K562 (cell line): ENCODE measurements at regions of chr17 and their contacts with region 1.

Region 1: DNA sequence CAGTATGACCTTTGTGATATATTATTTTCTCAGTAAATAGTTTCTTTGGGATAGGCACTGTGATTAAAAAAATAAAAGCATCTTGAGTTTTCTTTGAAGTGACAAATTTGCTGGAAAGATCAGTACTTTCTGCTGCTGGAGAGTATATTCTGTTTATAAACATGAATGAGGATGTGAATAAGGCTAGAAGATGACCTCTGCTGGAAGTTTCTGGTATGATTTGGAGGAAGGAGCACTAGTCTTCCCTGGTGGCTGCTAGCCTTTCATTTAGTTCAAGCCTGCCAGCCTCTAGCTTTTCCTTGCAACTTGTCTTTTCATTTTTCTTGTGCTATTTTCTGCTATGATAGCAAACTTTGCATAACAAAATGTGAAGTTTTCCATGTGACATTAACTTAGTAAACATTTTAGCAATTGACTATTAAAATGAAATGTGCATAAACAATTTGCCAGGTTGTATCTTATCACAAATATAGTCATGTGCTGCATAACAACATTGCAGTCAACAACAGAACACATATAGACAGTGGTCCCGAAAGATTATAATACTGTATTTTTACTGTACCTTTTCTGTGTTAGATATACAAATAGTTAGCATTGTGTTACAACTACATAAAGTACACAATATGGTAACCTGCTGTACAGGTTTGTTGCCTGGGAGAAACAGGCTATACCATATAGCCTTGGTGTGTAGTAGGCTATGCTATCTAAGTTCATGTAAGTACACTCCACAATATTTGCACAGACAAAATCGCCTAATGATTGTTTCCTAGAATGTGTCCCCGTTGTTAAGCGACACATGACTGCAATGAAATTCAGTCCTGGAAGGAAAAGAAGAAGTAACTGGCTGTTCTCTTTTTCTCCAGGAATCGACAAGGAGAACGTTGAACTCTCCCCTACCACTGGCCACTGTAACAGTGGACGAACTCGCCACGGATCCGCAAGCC is 18.1 kb upstream of the RAB11FIP4 start:
- DNase-seq: peak; percentile 26 to 58 (median 42)
- ATAC-seq: peak; percentile 86
- H3K4me3 ChIP-seq: no peak overlapping the region
- H3K27ac ChIP-seq: no peak overlapping the region
- H3K4me1 ChIP-seq: no peaks in the 10 kb centered on the region
- H3K27me3 ChIP-seq: no peaks in the 10 kb centered on the region
- CTCF ChIP-seq: peak; percentile 53 to 68 (median 56); a peak in 5 of 6 replicates
- EP300 ChIP-seq: no peak
- POLR2A ChIP-seq: no peak
- RAD21 ChIP-seq: peak; percentile 49 to 79

Region 2: DNA sequence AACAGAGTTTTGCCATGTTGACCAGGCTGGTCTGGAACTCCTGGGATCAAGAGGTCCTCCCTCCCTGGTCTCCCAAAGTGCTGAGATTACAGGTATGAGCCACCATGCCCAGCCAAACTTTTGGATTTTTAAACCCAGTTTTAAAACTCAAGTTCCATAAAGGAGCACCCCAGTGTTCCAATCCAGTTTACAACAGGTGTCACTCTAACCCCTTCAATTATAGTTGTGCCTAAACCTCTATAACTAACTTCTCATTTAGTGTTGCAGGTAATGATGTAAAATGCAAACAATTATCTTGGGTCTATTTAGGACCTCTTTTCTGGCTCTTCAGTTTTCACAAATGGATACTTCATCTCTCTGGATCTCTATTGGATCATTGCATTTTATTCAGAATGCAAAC is 459.5 kb before region 1 on chr17:
- CTCF ChIA-PET with region 1: no interaction called
- POLR2A ChIA-PET with region 1: no interaction called
- in situ Hi-C with region 1: loop called (anchors 10 kb)
- intact Hi-C with region 1: no loop called
- DNase-seq: no peak
- ATAC-seq: no peak
- H3K4me3 ChIP-seq: no peak overlapping the region
- H3K27ac ChIP-seq: no peak overlapping the region
- H3K4me1 ChIP-seq: no peaks in the 10 kb centered on the region
- H3K27me3 ChIP-seq: peaks cover 0 to 2% of the 10 kb centered on the region in 2 experiments; a peak in 2 of 5 replicates
- CTCF ChIP-seq: peak in 1 of 3 experiments; percentile 13; a peak in 1 of 6 replicates
- EP300 ChIP-seq: no peak
- POLR2A ChIP-seq: no peak
- RAD21 ChIP-seq: peak in 1 of 2 experiments; percentile 32; a peak in 2 of 4 replicates

Region 3: DNA sequence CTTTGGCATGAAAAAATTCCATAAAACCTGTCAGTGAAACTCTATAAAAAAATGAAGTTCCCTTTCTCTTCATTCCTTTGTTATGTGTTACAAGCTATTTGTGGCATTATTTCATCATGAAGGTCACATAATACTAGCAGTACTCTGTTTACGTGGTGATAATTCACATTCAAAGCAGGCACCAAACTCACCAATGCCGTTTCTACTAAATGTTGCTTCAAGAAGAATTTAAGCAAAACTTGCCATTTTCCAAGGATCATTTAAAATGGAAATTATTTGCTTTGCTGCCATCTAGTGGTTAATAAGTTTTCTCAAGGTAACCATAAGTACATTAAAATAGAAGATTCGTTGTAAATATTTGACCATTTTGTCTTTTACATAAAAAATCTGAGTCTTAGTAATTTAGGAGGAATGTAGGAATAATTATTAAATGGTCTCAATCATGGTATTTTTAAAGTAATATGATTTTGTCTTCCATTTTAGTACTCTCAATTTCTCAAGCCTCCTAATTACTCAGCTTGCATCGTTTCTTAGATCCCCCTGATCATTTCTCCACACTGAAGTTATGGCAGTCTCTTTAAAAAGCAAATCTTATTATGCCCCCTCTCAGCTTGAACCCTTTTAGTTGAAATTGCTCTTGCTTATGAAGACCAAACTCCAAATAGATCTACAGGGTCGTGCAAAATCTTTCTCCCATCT is 157.2 kb before region 1 on chr17:
- CTCF ChIA-PET with region 1: interaction called, 5 read pairs
- POLR2A ChIA-PET with region 1: no interaction called
- in situ Hi-C with region 1: no loop called
- intact Hi-C with region 1: loop called (anchors 10 kb)
- DNase-seq: peak in 2 of 4 experiments; percentile 17 to 41
- ATAC-seq: 0 out of 3 replicates have a peak, but pooled peaks have one; percentile 33
- H3K4me3 ChIP-seq: no peak overlapping the region
- H3K27ac ChIP-seq: no peak overlapping the region
- H3K4me1 ChIP-seq: no peaks in the 10 kb centered on the region
- H3K27me3 ChIP-seq: no peaks in the 10 kb centered on the region
- CTCF ChIP-seq: peak; percentile 15 to 67 (median 42); a peak in 4 of 6 replicates
- EP300 ChIP-seq: no peak
- POLR2A ChIP-seq: no peak
- RAD21 ChIP-seq: peak; percentile 64 to 83

Region 4: GRCh38 chr17:31269578-31269983 is 103.8 kb before region 1 on chr17:
- CTCF ChIA-PET with region 1: interaction called, 3 read pairs
- POLR2A ChIA-PET with region 1: no interaction called
- in situ Hi-C with region 1: no loop called
- intact Hi-C with region 1: loop called (anchors 5 kb)
- DNase-seq: no peak
- ATAC-seq: no peak
- H3K4me3 ChIP-seq: no peak overlapping the region
- H3K27ac ChIP-seq: no peak overlapping the region
- H3K4me1 ChIP-seq: no peaks in the 10 kb centered on the region; a peak in 1 of 5 replicates
- H3K27me3 ChIP-seq: no peaks in the 10 kb centered on the region
- CTCF ChIP-seq: no peak
- EP300 ChIP-seq: no peak
- POLR2A ChIP-seq: no peak
- RAD21 ChIP-seq: no peak

Region 5: DNA sequence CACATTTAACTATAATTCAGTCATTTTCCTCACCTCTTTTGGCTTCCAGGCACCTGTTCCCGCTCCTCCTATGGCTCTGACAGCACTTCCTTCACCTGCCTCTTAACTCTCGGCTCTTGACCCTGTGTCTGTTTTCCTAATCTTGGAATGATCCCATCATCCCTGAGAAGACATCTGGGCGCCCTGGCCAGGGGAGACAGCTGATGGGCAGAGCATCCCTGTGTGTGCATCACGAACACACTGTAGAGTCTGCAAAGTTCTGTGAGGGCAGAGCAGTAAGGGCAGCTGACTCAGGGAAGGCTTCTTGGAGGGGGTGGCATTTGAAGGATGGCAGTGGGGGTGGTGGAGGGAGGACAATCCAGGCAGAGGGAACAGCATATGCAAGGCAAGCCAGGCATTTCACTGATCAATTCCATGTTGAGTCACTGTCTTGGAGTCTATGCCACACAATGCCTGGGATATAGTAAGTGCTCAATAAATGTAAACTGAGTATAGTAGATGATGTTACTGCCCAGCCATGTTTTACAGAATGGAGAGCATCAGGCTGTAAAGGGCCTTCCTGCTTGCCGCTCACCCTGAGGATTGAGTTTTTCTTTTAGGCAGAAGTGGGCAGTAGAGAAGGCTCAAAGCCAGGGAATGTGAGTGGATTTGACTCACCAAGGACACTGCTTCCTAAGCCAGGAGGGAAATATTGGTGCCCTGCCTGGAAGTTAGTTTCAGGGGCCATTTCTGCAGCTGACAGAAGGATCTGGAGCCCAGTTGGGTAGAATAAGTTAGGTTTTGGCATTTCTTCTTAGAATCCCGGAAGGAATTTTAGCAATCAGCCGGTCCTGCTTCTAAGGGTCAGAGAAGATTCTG is 12.2 kb after region 1 on chr17:
- CTCF ChIA-PET with region 1: no interaction called
- POLR2A ChIA-PET with region 1: no interaction called
- in situ Hi-C with region 1: no loop called
- intact Hi-C with region 1: no loop called
- DNase-seq: no peak
- ATAC-seq: no peak
- H3K4me3 ChIP-seq: no peak overlapping the region
- H3K27ac ChIP-seq: no peak overlapping the region
- H3K4me1 ChIP-seq: peaks cover 0 to 4% of the 10 kb centered on the region in 2 experiments; a peak in 3 of 5 replicates
- H3K27me3 ChIP-seq: peaks cover 0 to 23% of the 10 kb centered on the region in 2 experiments; a peak in 3 of 5 replicates
- CTCF ChIP-seq: no peak
- EP300 ChIP-seq: no peak
- POLR2A ChIP-seq: no peak
- RAD21 ChIP-seq: no peak